HEK293 (cell line): ENCODE measurements at regions of chr7 and their contacts with region 1.

Region 1: DNA sequence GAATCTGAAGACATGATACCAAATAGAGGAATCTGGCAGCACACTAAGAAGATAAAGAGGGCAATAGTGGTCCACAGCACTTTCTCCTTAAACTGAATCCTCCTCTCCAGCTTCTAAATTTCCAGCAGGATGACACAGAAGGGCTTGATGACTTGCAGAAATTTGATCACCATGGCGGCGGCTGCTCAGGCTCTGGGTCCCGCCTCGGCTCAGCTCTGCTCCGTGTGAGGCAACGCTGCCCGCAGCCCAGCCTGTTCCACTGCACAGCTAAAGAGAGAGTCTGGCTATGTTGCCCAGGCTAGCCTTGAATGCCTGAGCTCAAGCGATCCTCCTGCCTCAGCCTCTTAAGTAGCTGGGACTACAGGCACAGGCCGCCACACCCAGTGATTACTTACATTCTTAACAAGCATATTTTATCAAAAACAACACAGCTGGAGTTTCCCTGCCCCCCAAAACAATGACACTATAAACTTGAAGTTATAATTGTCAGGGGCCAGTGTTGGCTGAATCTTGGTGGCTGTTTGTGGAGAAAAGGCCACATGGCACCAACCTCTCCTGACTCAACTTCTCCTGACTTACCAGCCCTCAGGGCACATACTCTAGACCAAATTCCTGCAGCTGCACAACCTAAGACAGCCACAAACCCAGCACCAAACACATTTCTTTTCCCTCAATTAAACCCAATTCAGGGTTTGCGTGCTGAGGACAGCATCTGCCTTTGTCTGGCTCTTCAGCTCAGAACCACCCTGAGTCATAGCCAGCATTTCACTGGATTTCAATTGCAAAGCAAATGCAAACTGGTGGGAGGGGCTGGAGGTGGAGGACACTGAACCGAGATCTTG is 11.6 kb upstream of the TNPO3 start:
- H3K4me3 ChIP-seq: no peak overlapping the region
- H3K27ac ChIP-seq: no peak overlapping the region
- H3K4me1 ChIP-seq: no peaks in the 10 kb centered on the region
- CTCF ChIP-seq: no peak

Region 2: GRCh38 chr7:129054438-129055293 is 11.8 kb before region 1 on chr7 and contains the start of gene TNPO3:
- CTCF ChIA-PET with region 1: no interaction called
- POLR2A ChIA-PET with region 1: interaction called, 15 read pairs
- H3K4me3 ChIP-seq: peak within 1 kb of the TSS; percentile 78
- H3K27ac ChIP-seq: peak within 1 kb of the TSS; percentile 88
- H3K4me1 ChIP-seq: no peaks in the 10 kb centered on the region
- CTCF ChIP-seq: peak; percentile 73

Region 3: DNA sequence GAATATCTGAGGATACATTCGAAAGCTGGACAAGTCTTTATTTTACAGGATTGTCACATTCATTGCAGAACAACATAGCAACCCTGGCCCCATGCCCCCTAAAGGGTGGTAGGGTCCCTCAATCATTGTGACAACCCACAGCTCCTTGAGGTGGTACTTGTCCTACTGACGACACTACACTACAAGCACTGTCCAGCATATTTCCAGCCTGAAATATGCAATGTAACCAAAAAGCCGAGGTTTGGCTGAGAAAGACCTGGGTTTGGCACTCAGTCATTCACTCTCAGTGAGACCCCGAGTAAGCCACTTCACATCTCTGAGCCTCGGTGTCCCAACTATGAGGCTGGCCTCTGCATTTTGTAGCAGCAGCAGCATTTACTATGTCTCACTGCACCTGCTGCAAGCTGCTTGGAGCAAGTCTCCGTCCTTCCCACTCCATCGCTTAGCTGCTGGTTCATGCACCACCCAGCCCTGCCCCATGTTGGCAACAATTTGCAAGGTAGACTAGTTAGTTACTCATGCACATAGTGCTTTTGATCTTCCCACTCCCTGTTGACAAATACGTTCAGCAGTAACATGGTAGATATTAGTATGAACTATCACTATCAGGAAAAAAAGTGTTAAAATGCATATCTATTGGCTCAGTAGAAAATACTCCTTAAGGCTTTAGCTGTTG is 32.0 kb after region 1 on chr7:
- CTCF ChIA-PET with region 1: no interaction called
- POLR2A ChIA-PET with region 1: no interaction called
- H3K4me3 ChIP-seq: no peak overlapping the region
- H3K27ac ChIP-seq: no peak overlapping the region
- H3K4me1 ChIP-seq: no peaks in the 10 kb centered on the region
- CTCF ChIP-seq: no peak